ENCODE measurements at regions of chr1 and their contacts with region 1.

Region 1: GRCh38 chr1:16243936-16244649 is 7.1 kb upstream of the CPLANE2 start:
- DNase-seq: no peak

Region 2: DNA sequence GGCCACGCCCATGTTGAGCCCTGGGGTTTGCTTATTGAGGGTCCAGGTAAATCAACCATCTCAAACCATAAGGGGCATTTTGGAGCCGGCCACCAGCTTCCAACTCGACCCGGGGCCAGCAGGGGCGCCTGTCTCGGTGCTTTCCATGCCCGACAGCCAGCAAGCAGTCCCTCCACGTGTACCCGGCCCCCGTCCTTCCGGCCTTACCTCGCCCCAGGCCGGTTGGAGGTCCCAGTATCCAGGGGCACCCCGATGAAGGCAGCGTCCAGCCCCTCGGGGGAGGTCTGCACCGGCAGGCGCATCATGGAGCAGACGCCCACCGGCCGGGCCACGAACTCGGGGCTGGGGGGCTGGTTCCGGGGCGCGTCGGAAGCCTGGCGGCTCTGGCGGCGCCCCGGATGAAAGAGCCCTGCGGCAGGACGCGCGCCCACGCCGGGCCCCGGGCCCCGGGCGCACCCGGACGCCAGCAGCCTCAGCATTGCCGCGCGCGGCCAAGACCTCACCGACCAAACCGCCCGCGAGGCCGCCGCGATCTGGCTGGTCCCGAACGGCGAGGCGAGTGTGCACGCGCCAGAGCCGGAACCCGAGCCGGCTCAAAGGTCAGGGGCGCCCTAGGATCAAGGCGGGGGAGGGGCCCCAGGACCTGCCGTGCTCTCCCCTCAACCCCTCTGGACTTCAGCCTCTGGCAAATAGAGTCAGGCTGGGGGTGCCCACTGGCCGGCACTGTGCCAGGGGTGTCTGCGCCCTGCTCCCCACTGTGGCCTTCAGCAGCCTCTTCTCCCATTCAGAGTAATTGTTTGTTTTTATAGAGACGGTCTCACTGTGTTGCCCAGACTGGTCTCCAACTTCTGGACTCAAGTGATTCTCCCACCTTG is 659.4 kb before region 1 on chr1 and contains the start of gene AGMAT:
- intact Hi-C with region 1: no loop called
- DNase-seq: no peak
- total RNA-seq, gene AGMAT: 0.11 TPM

Region 3: DNA sequence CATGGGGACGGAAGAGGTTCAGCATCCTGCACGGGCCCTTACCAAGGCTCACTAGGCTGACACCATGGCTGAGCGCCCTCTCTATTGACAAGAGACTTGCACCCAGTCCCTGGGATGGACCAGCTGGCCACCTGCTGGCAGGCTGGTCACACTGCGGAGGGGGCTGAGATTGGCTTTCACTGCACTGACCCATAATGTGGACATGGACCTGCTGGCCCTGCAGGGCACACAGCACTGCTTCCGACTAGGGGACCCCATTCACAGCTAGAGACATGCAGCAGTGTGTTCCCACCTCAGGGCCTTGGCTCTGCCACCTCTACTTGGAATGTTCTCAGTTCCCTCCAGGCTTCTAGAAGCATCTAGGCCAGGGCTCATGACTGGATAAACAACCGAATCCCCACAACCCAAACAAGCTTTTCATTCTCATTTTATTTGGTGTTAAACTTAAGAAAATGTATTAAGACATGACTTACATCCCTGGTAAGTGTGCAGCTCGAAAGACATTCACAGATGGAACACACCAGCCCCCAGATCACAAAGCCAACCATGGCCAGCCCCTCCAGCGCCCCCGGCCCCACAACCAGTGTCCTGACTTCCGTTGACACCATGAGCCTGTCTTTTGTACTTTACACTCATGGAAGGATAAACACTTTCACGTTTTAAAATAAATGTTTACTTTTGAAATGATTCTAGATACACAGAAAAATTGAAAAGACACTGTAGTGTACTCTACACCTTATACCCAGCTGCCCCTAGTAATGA is 249.3 kb before region 1 on chr1:
- intact Hi-C with region 1: no loop called
- DNase-seq: no peak

Region 4: DNA sequence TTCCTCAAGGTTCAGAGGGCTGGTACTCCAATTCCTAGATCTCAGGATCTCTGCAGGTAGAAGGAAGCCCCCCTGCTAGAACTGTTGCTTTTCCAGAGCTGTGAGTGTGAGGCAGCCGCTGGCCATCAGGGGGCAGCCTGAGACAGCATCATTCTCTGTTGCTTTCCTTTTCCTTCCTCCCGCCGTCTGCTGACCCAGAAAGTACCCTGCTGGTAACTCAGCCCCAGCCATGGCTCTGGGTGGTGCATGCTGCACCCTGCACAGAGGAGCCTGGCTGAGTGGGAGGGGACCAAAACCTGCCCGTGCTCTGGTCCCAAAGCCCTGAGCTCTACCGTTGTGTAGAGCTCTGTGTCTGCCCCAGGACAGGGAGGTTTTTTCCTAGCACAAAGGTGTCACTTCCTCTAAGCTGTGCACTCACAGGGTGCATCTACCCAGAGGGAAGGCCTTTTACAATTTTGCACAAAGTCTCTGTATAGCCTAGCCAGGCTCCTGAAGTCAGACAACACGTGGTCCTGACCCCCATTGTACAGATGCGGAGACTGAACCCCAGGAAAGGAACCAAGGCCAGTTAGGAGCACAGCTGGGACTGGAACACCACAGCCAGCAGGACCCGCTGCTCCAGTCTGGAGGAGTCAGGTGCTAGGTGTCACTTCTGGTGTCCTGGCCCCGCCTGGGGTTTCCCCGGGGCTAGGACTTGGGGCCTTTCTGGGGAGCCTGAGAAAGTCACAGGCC is 165.0 kb before region 1 on chr1:
- intact Hi-C with region 1: loop called (anchors 2 kb)
- DNase-seq: no peak

Region 5: GRCh38 chr1:16146279-16147155 is 97.6 kb before region 1 on chr1:
- intact Hi-C with region 1: no loop called
- DNase-seq: peak; percentile 92

Region 6: GRCh38 chr1:16187748-16188401 is 56.2 kb before region 1 on chr1:
- intact Hi-C with region 1: loop called (anchors 5 kb)
- DNase-seq: no peak

Region 7: GRCh38 chr1:16351994-16352841 is 108.1 kb after region 1 on chr1 and contains the start of gene FBXO42:
- intact Hi-C with region 1: loop called (anchors 5 kb)
- DNase-seq: peak; percentile 96
- total RNA-seq, gene FBXO42: 14.1 TPM